Heart right ventricle (tissue), 16 donors: ENCODE measurements at regions of chr10 and their contacts with region 1.

Region 1: GRCh38 chr10:75733135-75733890 is 301.9 kb downstream of the LRMDA start:
- DNase-seq: no peak
- ATAC-seq: no peak
- H3K4me3 ChIP-seq: no peak overlapping the region
- H3K27ac ChIP-seq: no peak overlapping the region
- H3K4me1 ChIP-seq: no peaks in the 10 kb centered on the region
- H3K27me3 ChIP-seq: peaks cover 0 to 3% (median 0%) of the 10 kb centered on the region in 7 donors
- CTCF ChIP-seq: no peak

Region 2: DNA sequence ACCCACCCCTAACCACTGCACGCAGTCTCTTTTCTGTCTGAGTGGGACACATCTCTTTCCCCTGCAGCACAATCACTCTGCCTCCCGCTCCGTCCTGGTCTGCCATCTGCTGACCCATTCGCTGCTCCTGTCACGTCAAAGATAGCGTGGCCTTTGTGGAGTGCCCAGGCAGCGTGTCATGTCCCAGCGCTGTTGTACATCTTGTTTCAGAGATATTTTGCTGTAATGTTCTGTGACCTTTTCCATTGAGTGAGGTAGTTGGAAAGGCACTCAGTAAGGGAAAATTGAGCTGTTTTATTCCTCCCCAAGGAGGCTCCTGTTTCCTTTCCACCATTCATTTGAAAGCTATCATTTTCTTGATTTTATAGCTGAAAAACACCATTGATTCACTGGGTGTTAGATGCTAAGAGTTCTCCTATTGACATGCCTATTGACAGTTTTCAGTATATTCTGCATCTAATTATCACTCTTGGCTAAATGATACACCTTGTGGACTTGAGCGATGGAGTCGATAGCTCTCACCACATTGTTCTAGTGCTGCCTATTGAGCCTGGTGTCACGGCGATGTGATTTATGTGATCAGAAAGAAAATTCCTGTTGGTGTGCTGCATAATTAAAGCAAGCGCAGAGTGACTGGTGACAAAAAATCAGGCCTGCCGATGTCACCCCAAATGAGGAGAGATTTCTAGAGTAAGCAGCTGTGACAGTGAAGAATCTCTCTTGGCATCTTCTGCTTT is 70.7 kb after region 1 on chr10:
- intact Hi-C with region 1: no loop called
- DNase-seq: peak; percentile 11 to 27
- ATAC-seq: peak in 4 of 8 donors; percentile 29 to 86 (median 66)
- H3K4me3 ChIP-seq: no peak overlapping the region
- H3K27ac ChIP-seq: no peak overlapping the region
- H3K4me1 ChIP-seq: no peaks in the 10 kb centered on the region
- H3K27me3 ChIP-seq: no peaks in the 10 kb centered on the region
- CTCF ChIP-seq: peak in 1 of 9 donors; percentile 12

Region 3: GRCh38 chr10:75916906-75917305 is 183.6 kb after region 1 on chr10:
- intact Hi-C with region 1: loop called in 1 of 10 experiments (anchors 5 kb)
- DNase-seq: no peak
- ATAC-seq: no peak
- H3K4me3 ChIP-seq: no peak overlapping the region
- H3K27ac ChIP-seq: no peak overlapping the region
- H3K4me1 ChIP-seq: peaks cover 0 to 18% (median 10%) of the 10 kb centered on the region in 9 donors
- H3K27me3 ChIP-seq: no peaks in the 10 kb centered on the region
- CTCF ChIP-seq: no peak